ENCODE measurements at regions of chr10 and their contacts with region 1.

Region 1: DNA sequence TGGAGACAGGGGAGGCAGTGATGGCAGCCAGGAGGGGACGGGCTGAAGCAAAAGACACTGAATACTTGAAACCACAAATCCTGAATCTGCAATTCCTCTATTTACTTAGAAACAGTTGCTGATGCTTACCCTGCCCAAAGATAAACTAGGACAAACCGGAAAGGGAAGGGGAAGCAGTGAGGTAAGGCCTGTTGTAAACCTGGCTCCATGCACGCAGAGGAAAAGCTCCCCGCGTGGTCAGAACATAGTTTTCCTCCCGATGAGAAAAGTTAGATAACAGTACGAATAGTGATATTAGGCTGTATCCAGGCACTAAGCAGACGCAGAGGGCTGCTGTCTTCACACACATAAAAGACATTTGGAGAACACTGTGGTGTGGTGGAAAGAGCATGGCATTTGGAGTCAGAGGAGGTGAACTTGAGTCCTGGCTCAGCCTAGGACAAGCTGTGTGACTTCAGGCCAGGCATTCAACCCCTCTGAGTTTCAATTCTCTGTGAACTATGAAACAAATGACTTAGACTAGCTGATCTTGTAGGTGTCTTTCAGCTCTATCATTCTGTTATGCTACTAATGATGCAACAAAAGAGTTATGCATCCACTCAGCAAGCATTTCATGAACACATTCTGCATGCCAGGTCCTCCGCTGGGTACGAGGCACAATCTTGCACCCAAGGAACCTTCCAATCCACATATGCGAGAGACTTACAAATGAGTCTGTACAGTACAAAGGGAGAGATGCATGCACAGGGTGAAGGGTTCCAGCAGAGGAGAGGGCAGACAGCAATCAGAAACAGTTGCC is 80.9 kb downstream of the SORBS1 start:
- DNase-seq: no peak
- H3K4me3 ChIP-seq: no peak overlapping the region
- H3K4me3 Mint-ChIP-seq: peak overlapping the region; percentile 2
- H3K27ac Mint-ChIP-seq: peak overlapping the region; percentile 76
- H3K4me1 ChIP-seq: peaks cover 78% of the 10 kb centered on the region
- H3K4me1 Mint-ChIP-seq: peaks cover 44% of the 10 kb centered on the region
- H3K27me3 ChIP-seq: no peaks in the 10 kb centered on the region
- H3K27me3 Mint-ChIP-seq: no peaks in the 10 kb centered on the region
- CTCF ChIP-seq: no peak

Region 2: DNA sequence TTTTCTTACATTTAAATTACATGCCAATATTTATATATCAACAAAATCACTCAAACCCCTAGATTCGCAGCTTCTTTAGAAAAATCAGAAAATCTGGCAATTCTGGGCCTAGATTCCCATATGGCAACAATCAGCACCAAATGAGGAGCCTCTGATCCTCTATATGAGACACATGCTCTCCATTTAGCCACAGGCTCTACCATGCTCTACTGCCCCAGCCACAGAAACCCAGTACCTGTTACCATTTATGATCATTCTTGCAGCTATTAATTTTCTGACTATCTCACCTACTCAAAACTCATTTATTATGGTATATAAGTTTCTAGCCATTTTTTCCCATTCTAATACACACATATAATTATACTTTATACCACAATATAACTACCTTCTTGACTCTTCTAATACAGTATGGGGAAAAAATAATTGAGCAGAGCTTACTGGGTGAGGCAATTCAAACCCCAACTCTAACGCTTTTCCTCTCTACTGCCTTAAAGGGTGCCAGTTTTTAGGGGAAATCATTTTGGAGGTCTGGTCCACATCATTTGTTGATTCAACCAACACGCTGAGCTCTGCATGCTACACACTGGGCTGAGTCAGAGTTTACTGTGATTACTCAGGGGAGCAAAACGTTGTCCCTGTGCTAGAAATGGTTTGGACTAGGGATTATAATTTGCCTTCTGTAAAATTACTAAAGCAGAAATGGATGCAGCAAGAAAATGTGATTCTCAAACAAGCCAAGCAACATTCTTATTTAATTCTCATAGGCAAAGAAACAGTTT is 201.1 kb before region 1 on chr10:
- CTCF ChIA-PET with region 1: no interaction called
- POLR2A ChIA-PET with region 1: no interaction called
- intact Hi-C with region 1: no loop called
- DNase-seq: no peak
- H3K4me3 ChIP-seq: no peak overlapping the region
- H3K4me3 Mint-ChIP-seq: no peak overlapping the region
- H3K27ac Mint-ChIP-seq: peak overlapping the region; percentile 79
- H3K4me1 ChIP-seq: peaks cover 92% of the 10 kb centered on the region
- H3K4me1 Mint-ChIP-seq: peaks cover 63% of the 10 kb centered on the region
- H3K27me3 ChIP-seq: no peaks in the 10 kb centered on the region
- H3K27me3 Mint-ChIP-seq: no peaks in the 10 kb centered on the region
- CTCF ChIP-seq: no peak

Region 3: GRCh38 chr10:95391581-95392216 is 88.6 kb before region 1 on chr10:
- CTCF ChIA-PET with region 1: no interaction called
- POLR2A ChIA-PET with region 1: no interaction called
- intact Hi-C with region 1: no loop called
- DNase-seq: peak in 1 of 2 experiments; percentile 46
- H3K4me3 ChIP-seq: no peak overlapping the region
- H3K4me3 Mint-ChIP-seq: no peak overlapping the region
- H3K27ac Mint-ChIP-seq: no peak overlapping the region
- H3K4me1 ChIP-seq: no peaks in the 10 kb centered on the region
- H3K4me1 Mint-ChIP-seq: peaks cover 9% of the 10 kb centered on the region
- H3K27me3 ChIP-seq: no peaks in the 10 kb centered on the region
- H3K27me3 Mint-ChIP-seq: no peaks in the 10 kb centered on the region
- CTCF ChIP-seq: no peak

Region 4: GRCh38 chr10:95445837-95446486 is 34.3 kb before region 1 on chr10:
- CTCF ChIA-PET with region 1: interaction called, 3 read pairs
- POLR2A ChIA-PET with region 1: interaction called, 3 read pairs
- intact Hi-C with region 1: loop called (anchors 5 kb)
- DNase-seq: peak; percentile 59 to 61
- H3K4me3 ChIP-seq: no peak overlapping the region
- H3K4me3 Mint-ChIP-seq: no peak overlapping the region
- H3K27ac Mint-ChIP-seq: no peak overlapping the region
- H3K4me1 ChIP-seq: peaks cover 3% of the 10 kb centered on the region
- H3K4me1 Mint-ChIP-seq: peaks cover 13% of the 10 kb centered on the region
- H3K27me3 ChIP-seq: no peaks in the 10 kb centered on the region
- H3K27me3 Mint-ChIP-seq: no peaks in the 10 kb centered on the region
- CTCF ChIP-seq: peak; percentile 82 to 90

Region 5: GRCh38 chr10:95467162-95467599 is 13.1 kb before region 1 on chr10:
- CTCF ChIA-PET with region 1: interaction called, 8 read pairs
- POLR2A ChIA-PET with region 1: interaction called, 7 read pairs
- intact Hi-C with region 1: loop called (anchors 1 kb)
- DNase-seq: peak; percentile 92 to 95
- H3K4me3 ChIP-seq: no peak overlapping the region
- H3K4me3 Mint-ChIP-seq: peak overlapping the region; percentile 18
- H3K27ac Mint-ChIP-seq: peak overlapping the region; percentile 46
- H3K4me1 ChIP-seq: peaks cover 46% of the 10 kb centered on the region
- H3K4me1 Mint-ChIP-seq: peaks cover 40% of the 10 kb centered on the region
- H3K27me3 ChIP-seq: no peaks in the 10 kb centered on the region
- H3K27me3 Mint-ChIP-seq: no peaks in the 10 kb centered on the region
- CTCF ChIP-seq: peak in 1 of 2 experiments; percentile 66

Region 6: DNA sequence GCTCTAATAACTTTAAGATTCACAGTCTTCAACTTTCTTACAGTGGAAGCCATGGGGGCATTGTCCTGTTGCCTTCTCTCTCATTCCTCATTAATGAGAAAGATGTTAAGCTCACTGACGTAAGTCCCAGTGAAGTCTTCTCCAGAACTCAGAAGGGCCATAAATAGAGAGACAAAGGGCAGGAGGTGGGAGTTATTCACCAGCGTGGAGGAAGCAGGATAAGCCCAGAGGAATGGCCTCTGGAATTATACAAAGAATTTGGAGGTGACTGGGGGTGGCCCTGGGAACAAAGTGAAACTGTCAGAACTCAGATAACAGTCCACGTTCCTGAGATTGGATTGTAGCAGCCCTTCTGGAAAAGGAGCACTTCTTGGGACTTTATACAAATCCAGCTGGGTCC is 28.4 kb after region 1 on chr10:
- CTCF ChIA-PET with region 1: interaction called, 6 read pairs
- POLR2A ChIA-PET with region 1: interaction called, 6 read pairs
- intact Hi-C with region 1: loop called (anchors 2 kb)
- DNase-seq: peak; percentile 69 to 86
- H3K4me3 ChIP-seq: no peak overlapping the region
- H3K4me3 Mint-ChIP-seq: peak overlapping the region; percentile 45
- H3K27ac Mint-ChIP-seq: peak overlapping the region; percentile 60
- H3K4me1 ChIP-seq: peaks cover 46% of the 10 kb centered on the region
- H3K4me1 Mint-ChIP-seq: peaks cover 20% of the 10 kb centered on the region
- H3K27me3 ChIP-seq: no peaks in the 10 kb centered on the region
- H3K27me3 Mint-ChIP-seq: no peaks in the 10 kb centered on the region
- CTCF ChIP-seq: no peak

Region 7: GRCh38 chr10:95539560-95540284 is 59.4 kb after region 1 on chr10:
- CTCF ChIA-PET with region 1: interaction called, 3 read pairs
- POLR2A ChIA-PET with region 1: no interaction called
- intact Hi-C with region 1: loop called (anchors 2 kb)
- DNase-seq: peak in 1 of 2 experiments; percentile 55
- H3K4me3 ChIP-seq: no peak overlapping the region
- H3K4me3 Mint-ChIP-seq: peak overlapping the region; percentile 6
- H3K27ac Mint-ChIP-seq: peak overlapping the region; percentile 80
- H3K4me1 ChIP-seq: peaks cover 100% of the 10 kb centered on the region
- H3K4me1 Mint-ChIP-seq: peaks cover 77% of the 10 kb centered on the region
- H3K27me3 ChIP-seq: no peaks in the 10 kb centered on the region
- H3K27me3 Mint-ChIP-seq: no peaks in the 10 kb centered on the region
- CTCF ChIP-seq: no peak

Region 8: GRCh38 chr10:95561182-95562075 is 81.1 kb after region 1 on chr10 and contains the start of gene SORBS1:
- CTCF ChIA-PET with region 1: interaction called, 3 read pairs
- POLR2A ChIA-PET with region 1: no interaction called
- intact Hi-C with region 1: loop called (anchors 2 kb)
- DNase-seq: peak; percentile 98
- H3K4me3 ChIP-seq: peak within 1 kb of the TSS; percentile 89
- H3K4me3 Mint-ChIP-seq: peak within 1 kb of the TSS; percentile 99
- H3K27ac Mint-ChIP-seq: peak within 1 kb of the TSS; percentile 83
- H3K4me1 ChIP-seq: peaks cover 50% of the 10 kb centered on the region
- H3K4me1 Mint-ChIP-seq: peaks cover 59% of the 10 kb centered on the region
- H3K27me3 ChIP-seq: no peaks in the 10 kb centered on the region
- H3K27me3 Mint-ChIP-seq: no peaks in the 10 kb centered on the region
- CTCF ChIP-seq: no peak
- total RNA-seq, gene SORBS1: 39.3 and 44.1 TPM in 2 replicates